Naive thymus-derived CD4-positive, alpha-beta T cell (primary cell): ENCODE measurements at regions of chr20 and their contacts with region 1.

Region 1: GRCh38 chr20:57383447-57384347 is 7.5 kb upstream of the RBM38 start:
- DNase-seq: no peak
- ATAC-seq: no peak
- H3K4me3 ChIP-seq: no peak overlapping the region
- H3K4me3 Mint-ChIP-seq: no peak overlapping the region
- H3K27ac ChIP-seq: no peak overlapping the region
- H3K27ac Mint-ChIP-seq: peak overlapping the region in 3 of 9 donors; percentile 45 to 77 (median 71)
- H3K4me1 ChIP-seq: peaks cover 6 to 12% of the 10 kb centered on the region in 2 donors
- H3K4me1 Mint-ChIP-seq: peaks cover 7 to 32% (median 20%) of the 10 kb centered on the region in 7 donors
- H3K27me3 ChIP-seq: no peaks in the 10 kb centered on the region
- H3K27me3 Mint-ChIP-seq: no peaks in the 10 kb centered on the region

Region 2: GRCh38 chr20:57493091-57493615 is 109.5 kb after region 1 on chr20:
- CTCF ChIA-PET with region 1: interaction called, 21 read pairs
- POLR2A ChIA-PET with region 1: interaction called, 4 read pairs
- intact Hi-C with region 1: loop called (anchors 1 kb)
- DNase-seq: no peak
- ATAC-seq: no peak
- H3K4me3 ChIP-seq: no peak overlapping the region
- H3K4me3 Mint-ChIP-seq: no peak overlapping the region
- H3K27ac ChIP-seq: no peak overlapping the region
- H3K27ac Mint-ChIP-seq: no peak overlapping the region
- H3K4me1 ChIP-seq: peaks cover 0 to 5% of the 10 kb centered on the region in 2 donors
- H3K4me1 Mint-ChIP-seq: peaks cover 3 to 8% (median 6%) of the 10 kb centered on the region in 7 donors
- H3K27me3 ChIP-seq: peaks cover 0 to under 1% of the 10 kb centered on the region in 2 donors
- H3K27me3 Mint-ChIP-seq: peaks cover 0 to 56% (median 7%) of the 10 kb centered on the region in 5 donors